Left cardiac atrium (tissue), 4 donors: ENCODE measurements at regions of chr3 and their contacts with region 1.

Region 1: GRCh38 chr3:151227807-151228665 is 25.0 kb upstream of the GPR171 start:
- DNase-seq: peak; percentile 65
- ATAC-seq: peak; percentile 87 to 89

Region 2: DNA sequence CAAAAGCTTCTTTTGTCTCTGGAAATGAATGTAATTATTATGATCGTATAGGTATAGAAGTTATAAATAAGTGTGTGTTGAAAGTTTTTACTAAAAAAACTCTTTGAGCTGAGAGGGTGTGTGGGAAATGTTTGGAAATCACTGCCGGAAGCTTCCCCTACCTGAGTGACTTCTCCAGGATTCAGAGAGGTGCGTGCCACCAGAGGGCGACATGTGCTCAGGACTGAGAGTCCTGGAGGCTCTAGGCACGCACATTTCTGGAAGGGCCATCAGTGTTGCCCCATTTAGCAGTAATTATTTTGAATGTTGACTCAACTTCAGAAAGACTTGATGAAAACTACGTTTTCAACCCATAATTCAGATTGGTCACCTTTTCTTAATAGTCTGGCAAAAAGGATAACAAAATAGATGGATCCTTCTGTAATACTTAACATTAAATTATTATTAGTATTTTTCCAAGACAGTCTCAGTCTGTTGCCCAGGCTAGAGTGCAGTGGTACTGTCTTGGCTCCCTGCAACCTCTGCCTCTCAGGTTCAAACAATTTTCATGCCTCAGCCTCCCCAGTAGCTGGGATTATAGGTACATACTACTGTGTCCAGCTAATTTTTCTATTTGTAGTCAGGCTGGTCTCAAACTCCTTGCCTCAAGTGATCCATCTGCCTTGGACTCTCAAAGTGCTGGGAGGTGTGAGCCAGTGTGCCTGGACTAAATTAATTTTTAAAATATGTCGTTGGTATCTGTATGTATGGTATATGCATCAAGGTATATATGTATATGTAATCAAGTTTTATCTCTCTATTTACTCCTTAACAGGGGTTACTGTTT is 59.6 kb before region 1 on chr3:
- intact Hi-C with region 1: loop called in 1 of 2 experiments (anchors 5 kb)
- DNase-seq: peak; percentile 82
- ATAC-seq: peak; percentile 78 to 82

Region 3: GRCh38 chr3:151282921-151283320 is 54.9 kb after region 1 on chr3:
- intact Hi-C with region 1: loop called (anchors 2 to 5 kb)
- DNase-seq: no peak
- ATAC-seq: peak; percentile 61 to 67

Region 4: GRCh38 chr3:151918253-151919029 is 690.4 kb after region 1 on chr3:
- intact Hi-C with region 1: loop called in 1 of 2 experiments (anchors 5 kb)
- DNase-seq: no peak
- ATAC-seq: peak; percentile 64 to 71